Common myeloid progenitor, CD34-positive (primary cell): ENCODE measurements at regions of chr11 and their contacts with region 1.

Region 1: DNA sequence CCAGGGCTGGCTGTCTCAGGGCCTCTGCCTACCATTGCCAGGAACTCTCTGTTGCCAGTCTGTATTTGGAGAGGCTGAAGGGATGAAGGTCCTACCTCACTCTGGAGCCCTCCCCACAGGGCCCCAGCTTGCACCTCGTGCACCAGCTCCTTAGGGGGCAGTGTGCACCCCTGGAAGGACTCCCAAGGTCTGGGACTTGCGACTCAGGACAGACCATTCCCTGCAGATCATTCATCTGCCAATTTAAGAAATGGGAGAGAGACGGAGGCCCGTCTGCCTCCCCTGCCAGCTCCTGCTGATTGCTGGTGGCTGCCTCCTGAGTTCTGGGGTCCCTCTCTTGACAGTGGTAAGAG is 27.5 kb upstream of the MALAT1 start:
- DNase-seq: peak; percentile 70 to 75 (median 72)
- H3K4me3 ChIP-seq: peak overlapping the region in 5 of 7 experiments; percentile 1 to 64 (median 35)
- H3K27ac ChIP-seq: peak overlapping the region; percentile 93 to 96
- H3K4me1 ChIP-seq: peaks cover 10 to 43% (median 35%) of the 10 kb centered on the region in 4 experiments
- H3K27me3 ChIP-seq: no peaks in the 10 kb centered on the region

Region 2: GRCh38 chr11:65382033-65382807 is 89.2 kb before region 1 on chr11 and contains the start of gene SLC25A45:
- CTCF ChIA-PET with region 1: interaction called, 11 read pairs
- POLR2A ChIA-PET with region 1: no interaction called
- DNase-seq: peak; percentile 95 to 98 (median 97)
- H3K4me3 ChIP-seq: peak within 1 kb of the TSS; percentile 39 to 80 (median 62)
- H3K27ac ChIP-seq: peak within 1 kb of the TSS; percentile 88 to 93
- H3K4me1 ChIP-seq: peaks cover 2 to 96% (median 87%) of the 10 kb centered on the region in 4 experiments
- H3K27me3 ChIP-seq: no peaks in the 10 kb centered on the region

Region 3: GRCh38 chr11:65425105-65425970 is 46.0 kb before region 1 on chr11:
- CTCF ChIA-PET with region 1: interaction called, 15 read pairs
- POLR2A ChIA-PET with region 1: interaction called, 92 read pairs
- DNase-seq: peak; percentile 78 to 92 (median 87)
- H3K4me3 ChIP-seq: peak overlapping the region; percentile 76 to 100 (median 99)
- H3K27ac ChIP-seq: peak overlapping the region; percentile 99 to 100
- H3K4me1 ChIP-seq: peaks cover 29 to 79% (median 57%) of the 10 kb centered on the region in 4 experiments
- H3K27me3 ChIP-seq: no peaks in the 10 kb centered on the region

Region 4: DNA sequence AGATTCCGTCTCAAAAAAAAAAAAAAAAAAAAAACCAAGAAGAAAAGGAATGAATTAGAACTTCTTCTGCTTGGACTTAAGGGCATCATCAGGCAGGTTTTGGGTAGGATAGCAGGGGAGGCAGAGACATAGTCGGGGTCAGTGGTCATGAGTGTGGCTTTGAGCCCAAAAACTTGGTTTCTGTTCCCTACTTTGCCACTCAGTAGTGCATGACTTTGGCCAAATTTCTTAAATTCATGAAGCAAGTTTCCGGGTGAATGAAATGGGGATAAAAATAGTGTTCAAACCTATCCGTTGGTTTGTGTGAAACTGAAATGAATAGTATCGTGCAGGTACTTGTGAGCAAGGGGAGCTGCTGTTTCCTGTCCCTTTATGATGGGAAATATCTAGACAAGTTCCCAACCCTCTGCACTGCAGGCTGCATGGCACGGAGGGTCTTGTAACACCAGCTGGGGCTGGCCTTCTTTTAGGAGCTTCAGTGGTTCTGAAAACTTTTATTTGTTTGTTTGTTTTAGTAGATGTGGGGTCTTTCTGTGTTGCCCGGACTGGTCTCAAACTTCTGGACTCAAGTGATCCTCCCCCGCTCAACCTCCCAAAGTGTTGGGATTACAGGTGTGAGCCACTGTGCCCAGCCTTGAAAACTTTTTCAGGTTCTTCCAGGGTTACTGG is 30.4 kb before region 1 on chr11:
- CTCF ChIA-PET with region 1: interaction called, 14 read pairs
- POLR2A ChIA-PET with region 1: interaction called, 3 read pairs
- DNase-seq: no peak
- H3K4me3 ChIP-seq: no peak overlapping the region
- H3K27ac ChIP-seq: no peak overlapping the region
- H3K4me1 ChIP-seq: peaks cover 11 to 36% (median 27%) of the 10 kb centered on the region in 4 experiments
- H3K27me3 ChIP-seq: no peaks in the 10 kb centered on the region

Region 5: DNA sequence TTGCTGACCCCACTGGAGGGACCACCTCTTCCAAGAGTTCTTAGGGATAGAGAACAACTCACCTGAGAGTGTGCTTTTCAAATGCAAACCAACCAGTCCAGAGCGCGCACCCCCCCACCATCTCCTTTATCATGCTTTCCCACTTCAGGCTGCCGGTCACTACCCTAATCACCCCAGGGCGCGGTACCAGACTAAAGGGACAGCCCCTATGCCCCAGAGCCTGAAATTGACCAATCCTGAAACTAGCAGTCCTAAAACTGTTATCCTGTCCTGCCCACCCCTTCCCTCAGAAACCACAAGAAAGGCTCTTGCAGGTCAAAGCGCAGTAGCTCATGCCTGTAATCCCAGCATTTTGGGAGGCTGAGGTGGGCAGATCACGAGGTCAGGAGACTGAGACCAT is 11.8 kb before region 1 on chr11:
- CTCF ChIA-PET with region 1: interaction called, 43 read pairs
- POLR2A ChIA-PET with region 1: interaction called, 6 read pairs
- DNase-seq: no peak
- H3K4me3 ChIP-seq: no peak overlapping the region
- H3K27ac ChIP-seq: no peak overlapping the region
- H3K4me1 ChIP-seq: peaks cover 0 to 14% (median 8%) of the 10 kb centered on the region in 4 experiments
- H3K27me3 ChIP-seq: no peaks in the 10 kb centered on the region